HAP-1 (cell line): ENCODE measurements at regions of chr4 and their contacts with region 1.

Region 1: GRCh38 chr4:138870737-138871554 is 144.6 kb upstream of the NOCT start:
- DNase-seq: peak; percentile 81
- H3K4me3 ChIP-seq: no peak overlapping the region
- H3K4me1 ChIP-seq: no peaks in the 10 kb centered on the region; the same call in 1 of the 2 replicates
- H3K27me3 ChIP-seq: no peaks in the 10 kb centered on the region

Region 2: GRCh38 chr4:138540056-138540800 is 330.7 kb before region 1 on chr4:
- in situ Hi-C with region 1: no loop called
- DNase-seq: no peak
- H3K4me3 ChIP-seq: no peak overlapping the region
- H3K4me1 ChIP-seq: no peaks in the 10 kb centered on the region
- H3K27me3 ChIP-seq: no peaks in the 10 kb centered on the region

Region 3: GRCh38 chr4:138576684-138577083 is 294.3 kb before region 1 on chr4:
- in situ Hi-C with region 1: loop called (anchors 25 kb)
- DNase-seq: peak; percentile 17 to 58
- H3K4me3 ChIP-seq: no peak overlapping the region
- H3K4me1 ChIP-seq: no peaks in the 10 kb centered on the region
- H3K27me3 ChIP-seq: no peaks in the 10 kb centered on the region

Region 4: GRCh38 chr4:138672393-138672976 is 198.5 kb before region 1 on chr4:
- in situ Hi-C with region 1: no loop called
- DNase-seq: no peak
- H3K4me3 ChIP-seq: no peak overlapping the region
- H3K4me1 ChIP-seq: no peaks in the 10 kb centered on the region
- H3K27me3 ChIP-seq: no peaks in the 10 kb centered on the region